HepG2 (cell line): ENCODE measurements at regions of chr5 and their contacts with region 1.

Region 1: DNA sequence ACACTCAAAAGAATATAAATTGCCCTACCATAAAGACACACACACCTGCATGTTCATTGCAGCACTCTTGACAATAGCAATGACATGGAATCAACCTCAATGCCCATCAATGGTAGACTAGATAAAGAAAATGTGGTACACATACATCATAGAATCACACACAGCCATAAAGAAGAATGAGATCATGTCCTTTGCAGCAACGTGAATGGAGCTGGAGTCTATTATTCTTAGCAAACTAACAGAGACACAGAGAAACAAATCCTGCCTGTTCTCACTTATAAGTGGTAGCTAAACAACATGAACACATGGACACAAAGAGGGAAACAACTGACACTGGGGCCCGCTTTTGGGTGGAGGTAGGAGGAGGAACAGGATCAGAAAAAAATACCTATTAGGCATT is 2062.2 kb upstream of the CDH6 start:
- DNase-seq: no peak
- ATAC-seq: no peak
- H3K4me3 ChIP-seq: no peak overlapping the region
- H3K27ac ChIP-seq: no peak overlapping the region
- H3K4me1 ChIP-seq: no peaks in the 10 kb centered on the region
- H3K27me3 ChIP-seq: no peaks in the 10 kb centered on the region
- CTCF ChIP-seq: no peak
- EP300 ChIP-seq: no peak
- POLR2A ChIP-seq: no peak
- RAD21 ChIP-seq: no peak

Region 2: DNA sequence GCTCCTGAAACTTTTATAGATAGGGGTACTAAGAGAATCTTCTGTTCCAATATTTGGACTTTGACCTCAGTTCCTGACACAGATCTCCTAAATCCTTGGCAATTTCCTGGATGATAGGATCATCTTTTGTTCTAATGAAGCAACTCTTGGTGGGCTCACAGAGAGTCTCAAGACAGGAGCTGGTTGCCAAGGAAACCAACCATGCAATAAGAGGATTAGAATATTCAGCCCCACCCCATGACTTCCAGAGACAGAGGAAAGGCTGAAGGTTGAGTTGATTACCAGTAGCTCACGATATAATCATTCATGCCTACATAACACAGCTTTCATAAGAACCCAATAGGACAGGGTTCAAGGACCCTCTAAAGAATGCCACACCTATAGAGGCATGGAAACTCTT is 12.0 kb after region 1 on chr5:
- CTCF ChIA-PET with region 1: no interaction called
- POLR2A ChIA-PET with region 1: no interaction called
- in situ Hi-C with region 1: no loop called
- intact Hi-C with region 1: loop called (anchors 1 kb)
- DNase-seq: no peak
- ATAC-seq: no peak
- H3K4me3 ChIP-seq: no peak overlapping the region
- H3K27ac ChIP-seq: no peak overlapping the region
- H3K4me1 ChIP-seq: no peaks in the 10 kb centered on the region
- H3K27me3 ChIP-seq: no peaks in the 10 kb centered on the region
- CTCF ChIP-seq: no peak
- EP300 ChIP-seq: no peak
- POLR2A ChIP-seq: no peak
- RAD21 ChIP-seq: no peak